Heart left ventricle (tissue), 16 donors: ENCODE measurements at regions of chr16 and their contacts with region 1.

Region 1: GRCh38 chr16:53892155-53892554 is 188.2 kb downstream of the FTO start:
- DNase-seq: peak in 2 of 5 donors; percentile 32 to 48
- ATAC-seq: peak in 3 of 4 donors; percentile 66 to 74 (median 69)
- H3K4me3 ChIP-seq: no peak overlapping the region
- H3K27ac ChIP-seq: no peak overlapping the region
- H3K4me1 ChIP-seq: peaks cover 3 to 45% (median 24%) of the 10 kb centered on the region in 12 donors
- H3K27me3 ChIP-seq: no peaks in the 10 kb centered on the region
- CTCF ChIP-seq: peak; percentile 59 to 83 (median 74)
- POLR2A ChIP-seq: no peak

Region 2: DNA sequence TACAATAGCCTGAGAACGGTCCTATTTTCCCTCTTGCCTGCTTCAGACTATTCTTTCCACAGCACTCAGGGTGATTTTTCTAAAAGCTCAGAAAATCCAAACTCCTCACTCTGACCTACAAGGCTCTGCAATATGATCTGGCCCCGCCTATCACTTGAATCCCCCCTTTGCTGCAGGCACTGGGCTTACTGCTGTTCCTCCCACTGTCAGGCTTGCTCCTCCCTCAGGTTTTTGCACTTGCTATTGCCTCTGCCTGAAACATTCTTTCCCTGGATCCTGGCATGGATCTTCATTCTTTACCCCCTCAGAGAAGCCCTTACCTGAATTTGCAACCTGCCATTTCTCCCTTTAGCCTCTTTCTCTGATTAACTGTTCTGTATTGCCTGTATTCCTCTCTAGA is 240.8 kb before region 1 on chr16:
- intact Hi-C with region 1: no loop called
- DNase-seq: no peak
- ATAC-seq: no peak
- H3K4me3 ChIP-seq: no peak overlapping the region
- H3K27ac ChIP-seq: no peak overlapping the region
- H3K4me1 ChIP-seq: no peaks in the 10 kb centered on the region
- H3K27me3 ChIP-seq: no peaks in the 10 kb centered on the region
- CTCF ChIP-seq: no peak
- POLR2A ChIP-seq: no peak

Region 3: DNA sequence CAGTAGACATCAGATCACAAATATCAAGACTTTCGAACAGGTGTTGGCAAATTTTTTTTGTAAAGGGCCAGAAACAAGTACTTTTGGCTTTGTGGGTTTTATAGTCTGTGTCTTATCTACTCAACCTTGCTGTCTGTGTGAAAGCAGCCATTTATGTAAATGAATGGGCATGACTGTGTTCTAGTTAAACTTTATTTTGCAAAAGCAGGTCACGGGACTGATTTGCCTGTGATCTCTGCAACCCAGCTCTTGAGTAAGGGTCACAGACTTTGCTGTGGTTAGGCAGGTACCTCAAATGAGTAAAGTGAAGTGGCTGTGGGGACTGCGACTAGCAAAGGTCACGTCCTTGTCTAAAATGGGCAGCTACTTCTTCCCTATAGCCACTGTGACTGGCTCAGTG is 51.7 kb before region 1 on chr16:
- intact Hi-C with region 1: no loop called
- DNase-seq: no peak
- ATAC-seq: no peak
- H3K4me3 ChIP-seq: no peak overlapping the region
- H3K27ac ChIP-seq: no peak overlapping the region
- H3K4me1 ChIP-seq: peaks cover 0 to 4% (median 0%) of the 10 kb centered on the region in 12 donors
- H3K27me3 ChIP-seq: no peaks in the 10 kb centered on the region
- CTCF ChIP-seq: no peak
- POLR2A ChIP-seq: no peak

Region 4: GRCh38 chr16:53852678-53853077 is 39.5 kb before region 1 on chr16:
- intact Hi-C with region 1: no loop called
- DNase-seq: no peak
- ATAC-seq: no peak
- H3K4me3 ChIP-seq: no peak overlapping the region
- H3K27ac ChIP-seq: no peak overlapping the region
- H3K4me1 ChIP-seq: peaks cover 0 to 13% (median 0%) of the 10 kb centered on the region in 12 donors
- H3K27me3 ChIP-seq: no peaks in the 10 kb centered on the region
- CTCF ChIP-seq: no peak
- POLR2A ChIP-seq: no peak

Region 5: GRCh38 chr16:54180421-54181359 is 288.5 kb after region 1 on chr16:
- intact Hi-C with region 1: loop called in 2 of 10 experiments (anchors 10 kb)
- DNase-seq: no peak
- ATAC-seq: no peak
- H3K4me3 ChIP-seq: no peak overlapping the region
- H3K27ac ChIP-seq: no peak overlapping the region
- H3K4me1 ChIP-seq: peaks cover 0 to 12% (median 0%) of the 10 kb centered on the region in 12 donors
- H3K27me3 ChIP-seq: peaks cover 0 to 14% (median 0%) of the 10 kb centered on the region in 9 donors
- CTCF ChIP-seq: no peak
- POLR2A ChIP-seq: no peak